Activated T-helper 1 cell treated with anti-CD3 and anti-CD28 coated beads, Interleukin-12 subunit alpha, Interleukin-12 subunit beta, Interleukin-2, Interleukin-4 antibody, amounts not matched to agents 30 ng/mL and 10 ng/mL and 1 ng/mL, durations not matched to agents 14 hours and 24 hours and 36 hours (primary cell): ENCODE measurements at regions of chr10 and their contacts with region 1.

Region 1: DNA sequence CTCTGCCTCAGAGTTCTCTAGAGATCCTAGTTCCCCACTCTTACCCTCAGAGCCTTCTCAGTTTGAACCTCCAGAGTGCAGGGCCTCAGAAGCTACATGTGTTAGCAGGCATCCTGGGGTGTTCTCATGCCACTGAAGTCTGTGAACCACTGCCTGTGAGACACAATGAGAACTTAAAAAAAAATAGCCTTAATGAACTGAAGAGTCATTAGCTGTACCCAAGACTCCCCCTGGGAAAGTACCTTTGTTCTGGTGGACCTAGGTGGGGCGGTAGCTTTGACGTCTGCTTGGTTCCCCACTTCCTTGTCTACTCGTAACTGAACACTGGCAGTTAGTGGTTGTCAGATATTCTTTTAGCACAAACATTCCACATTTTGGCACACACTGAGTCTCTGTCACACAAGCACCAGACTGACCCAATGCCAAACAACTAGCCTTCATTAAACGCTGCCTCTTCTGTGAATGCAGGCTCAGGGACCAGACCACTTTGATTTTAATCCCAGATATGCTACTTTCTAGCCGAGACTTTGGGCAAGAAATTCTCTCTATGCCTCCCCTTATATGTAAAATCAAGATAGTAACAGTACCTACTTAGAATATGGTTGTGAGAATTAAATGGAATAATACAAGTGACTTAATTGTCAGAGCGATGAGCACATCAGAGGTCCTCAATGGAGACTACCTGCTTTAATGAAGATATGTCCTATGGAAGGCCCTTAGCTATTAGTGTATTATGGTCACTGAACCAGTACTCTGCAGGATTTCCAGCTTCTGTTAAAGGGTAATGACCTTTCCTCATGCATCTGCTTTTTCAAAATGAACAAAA is 75.3 kb upstream of the CC2D2B start:
- DNase-seq: peak; percentile 71
- H3K4me3 Mint-ChIP-seq: peak overlapping the region; percentile 86
- H3K27ac Mint-ChIP-seq: peak overlapping the region; percentile 100
- H3K4me1 Mint-ChIP-seq: peaks cover 73% of the 10 kb centered on the region
- H3K27me3 Mint-ChIP-seq: no peaks in the 10 kb centered on the region

Region 2: GRCh38 chr10:95783741-95784140 is 48.7 kb before region 1 on chr10:
- intact Hi-C with region 1: loop called (anchors 1 kb)
- DNase-seq: no peak
- H3K4me3 Mint-ChIP-seq: no peak overlapping the region
- H3K27ac Mint-ChIP-seq: peak overlapping the region; percentile 69
- H3K4me1 Mint-ChIP-seq: peaks cover 75% of the 10 kb centered on the region
- H3K27me3 Mint-ChIP-seq: no peaks in the 10 kb centered on the region

Region 3: GRCh38 chr10:95792874-95793285 is 39.5 kb before region 1 on chr10:
- intact Hi-C with region 1: loop called (anchors 1 kb)
- DNase-seq: no peak
- H3K4me3 Mint-ChIP-seq: no peak overlapping the region
- H3K27ac Mint-ChIP-seq: peak overlapping the region; percentile 95
- H3K4me1 Mint-ChIP-seq: peaks cover 88% of the 10 kb centered on the region
- H3K27me3 Mint-ChIP-seq: peaks cover under 1% of the 10 kb centered on the region

Region 4: DNA sequence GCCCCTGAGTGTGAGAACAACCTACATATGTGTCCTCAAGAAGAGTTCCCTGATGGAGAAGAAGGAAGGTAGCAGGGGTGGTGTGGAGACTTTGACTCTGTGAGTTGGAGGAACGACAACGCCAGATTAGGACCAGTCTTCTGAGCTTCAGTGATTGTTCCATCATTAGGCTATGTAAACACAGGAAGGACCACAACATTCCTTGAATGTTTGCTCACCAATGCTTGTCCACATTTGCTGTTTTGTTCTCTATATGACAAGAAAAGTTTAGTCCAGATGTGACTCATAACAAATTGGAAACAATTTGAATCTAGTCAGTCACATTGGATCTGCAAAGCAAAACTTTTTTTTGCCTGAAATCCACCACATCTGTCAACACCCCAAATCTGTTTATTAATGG is 13.8 kb before region 1 on chr10:
- intact Hi-C with region 1: loop called (anchors 1 kb)
- DNase-seq: no peak
- H3K4me3 Mint-ChIP-seq: no peak overlapping the region
- H3K27ac Mint-ChIP-seq: peak overlapping the region; percentile 76
- H3K4me1 Mint-ChIP-seq: peaks cover 73% of the 10 kb centered on the region
- H3K27me3 Mint-ChIP-seq: no peaks in the 10 kb centered on the region